IMR-90 (cell line): ENCODE measurements at regions of chr10 and their contacts with region 1.

Region 1: GRCh38 chr10:89029785-89030437 is 39.3 kb downstream of the FAS start:
- DNase-seq: peak; percentile 84
- ATAC-seq: peak; percentile 57
- H3K4me3 ChIP-seq: no peak overlapping the region
- H3K27ac ChIP-seq: no peak overlapping the region
- H3K4me1 ChIP-seq: peaks cover 16% of the 10 kb centered on the region
- H3K27me3 ChIP-seq: no peaks in the 10 kb centered on the region
- CTCF ChIP-seq: peak; percentile 92
- POLR2A ChIP-seq: no peak
- RAD21 ChIP-seq: peak; percentile 95

Region 2: DNA sequence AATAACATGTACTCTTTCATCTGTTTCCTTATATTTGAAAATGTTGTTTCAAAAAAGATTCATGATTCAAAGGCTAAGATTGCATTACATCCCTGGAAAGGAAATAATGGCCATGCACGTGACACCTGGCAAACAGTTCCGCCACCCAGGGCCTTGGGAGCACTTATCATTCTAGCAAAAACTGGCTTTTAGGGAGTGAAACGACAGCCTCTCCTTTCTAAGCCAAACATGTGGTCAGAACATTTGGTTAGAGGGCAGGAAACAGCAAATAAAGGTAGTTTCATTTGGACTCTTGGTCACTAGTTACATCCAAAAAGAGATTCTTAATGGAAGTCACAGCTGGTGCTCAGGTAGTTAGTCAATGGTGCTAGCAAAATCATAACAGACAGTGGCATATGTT is 44.2 kb after region 1 on chr10:
- CTCF ChIA-PET with region 1: interaction called, 3 read pairs
- POLR2A ChIA-PET with region 1: no interaction called
- dilution Hi-C with region 1: no loop called
- in situ Hi-C with region 1: no loop called
- intact Hi-C with region 1: loop called (anchors 5 kb)
- DNase-seq: no peak
- ATAC-seq: no peak
- H3K4me3 ChIP-seq: no peak overlapping the region
- H3K27ac ChIP-seq: no peak overlapping the region
- H3K4me1 ChIP-seq: peaks cover 2% of the 10 kb centered on the region; the same call in 1 of the 2 replicates
- H3K27me3 ChIP-seq: no peaks in the 10 kb centered on the region; the same call in 1 of the 2 replicates
- CTCF ChIP-seq: no peak
- POLR2A ChIP-seq: no peak
- RAD21 ChIP-seq: no peak

Region 3: GRCh38 chr10:89207181-89207800 is 177.4 kb after region 1 on chr10 and contains the start of gene CH25H:
- CTCF ChIA-PET with region 1: interaction called, 12 read pairs
- POLR2A ChIA-PET with region 1: interaction called, 3 read pairs
- dilution Hi-C with region 1: no loop called
- in situ Hi-C with region 1: loop called (anchors 5 kb)
- intact Hi-C with region 1: no loop called
- DNase-seq: peak; percentile 74
- ATAC-seq: peak; percentile 87
- H3K4me3 ChIP-seq: peak within 1 kb of the TSS; percentile 39
- H3K27ac ChIP-seq: peak within 1 kb of the TSS; percentile 18; the same call in 1 of the 2 replicates
- H3K4me1 ChIP-seq: peaks cover 18% of the 10 kb centered on the region
- H3K27me3 ChIP-seq: peaks cover 8% of the 10 kb centered on the region
- CTCF ChIP-seq: no peak
- POLR2A ChIP-seq: no peak
- RAD21 ChIP-seq: no peak
- total RNA-seq, gene CH25H: 0.18 TPM in 1 of 2 replicates, not detected in the other

Region 4: DNA sequence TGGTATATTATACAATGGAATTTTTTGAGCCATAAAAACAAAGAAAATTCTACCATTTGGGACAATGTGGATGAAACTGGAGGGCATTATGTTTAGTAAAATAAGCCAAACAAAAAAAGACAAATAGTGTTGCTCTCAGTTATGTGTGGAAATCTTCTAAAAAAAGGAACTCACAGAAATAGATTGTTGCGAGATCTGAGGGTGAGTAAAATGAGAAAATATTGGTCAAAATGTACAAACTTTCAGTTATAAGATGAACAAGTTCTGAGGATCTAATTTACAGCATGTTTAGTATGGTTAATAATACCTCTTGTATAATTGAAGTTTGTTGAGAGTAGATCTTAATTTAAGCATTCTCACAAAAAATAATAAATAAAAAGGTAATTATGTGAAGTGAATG is 962.7 kb after region 1 on chr10:
- CTCF ChIA-PET with region 1: no interaction called
- POLR2A ChIA-PET with region 1: no interaction called
- dilution Hi-C with region 1: no loop called
- in situ Hi-C with region 1: no loop called
- intact Hi-C with region 1: no loop called
- DNase-seq: no peak
- ATAC-seq: no peak
- H3K4me3 ChIP-seq: no peak overlapping the region
- H3K27ac ChIP-seq: no peak overlapping the region
- H3K4me1 ChIP-seq: no peaks in the 10 kb centered on the region
- H3K27me3 ChIP-seq: no peaks in the 10 kb centered on the region
- CTCF ChIP-seq: no peak
- POLR2A ChIP-seq: no peak
- RAD21 ChIP-seq: no peak